GM12878 (cell line): ENCODE measurements at regions of chr4 and their contacts with region 1.

Region 1: GRCh38 chr4:53929955-53930798 is 134.2 kb downstream of the CHIC2 start:
- DNase-seq: peak; percentile 13
- ATAC-seq: peak; percentile 87
- H3K4me3 ChIP-seq: no peak overlapping the region
- H3K27ac ChIP-seq: no peak overlapping the region
- H3K4me1 ChIP-seq: no peaks in the 10 kb centered on the region
- H3K27me3 ChIP-seq: no peaks in the 10 kb centered on the region; a peak in 1 of 4 replicates
- CTCF ChIP-seq: peak; percentile 63 to 78 (median 65)
- EP300 ChIP-seq: no peak
- POLR2A ChIP-seq: no peak
- RAD21 ChIP-seq: peak; percentile 91

Region 2: DNA sequence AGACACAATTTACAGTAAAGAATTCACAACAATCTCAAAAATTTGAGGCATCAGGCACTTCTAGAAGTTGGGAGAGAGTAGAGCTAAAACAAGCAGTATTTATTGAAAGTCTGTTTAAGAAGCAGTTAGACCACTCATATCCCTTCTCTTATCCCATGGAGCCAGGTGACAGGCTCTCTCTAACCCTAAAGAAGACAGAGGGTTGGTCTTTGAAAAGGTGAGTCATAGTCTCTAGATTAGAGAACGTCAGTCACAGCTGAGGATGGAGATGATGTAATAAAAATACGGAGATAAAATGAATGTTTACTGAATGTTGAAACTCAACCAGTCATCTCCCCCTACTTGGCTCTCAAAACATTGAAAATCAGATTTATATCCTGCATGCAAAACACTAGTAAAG is 89.5 kb before region 1 on chr4:
- CTCF ChIA-PET with region 1: no interaction called
- POLR2A ChIA-PET with region 1: no interaction called
- RAD21 ChIA-PET with region 1: no interaction called
- SMC1A ChIA-PET with region 1: no interaction called
- in situ Hi-C with region 1: no loop called
- intact Hi-C with region 1: no loop called
- DNase-seq: no peak
- ATAC-seq: no peak
- H3K4me3 ChIP-seq: no peak overlapping the region
- H3K27ac ChIP-seq: no peak overlapping the region
- H3K4me1 ChIP-seq: no peaks in the 10 kb centered on the region
- H3K27me3 ChIP-seq: no peaks in the 10 kb centered on the region
- CTCF ChIP-seq: no peak
- EP300 ChIP-seq: no peak
- POLR2A ChIP-seq: no peak
- RAD21 ChIP-seq: no peak

Region 3: DNA sequence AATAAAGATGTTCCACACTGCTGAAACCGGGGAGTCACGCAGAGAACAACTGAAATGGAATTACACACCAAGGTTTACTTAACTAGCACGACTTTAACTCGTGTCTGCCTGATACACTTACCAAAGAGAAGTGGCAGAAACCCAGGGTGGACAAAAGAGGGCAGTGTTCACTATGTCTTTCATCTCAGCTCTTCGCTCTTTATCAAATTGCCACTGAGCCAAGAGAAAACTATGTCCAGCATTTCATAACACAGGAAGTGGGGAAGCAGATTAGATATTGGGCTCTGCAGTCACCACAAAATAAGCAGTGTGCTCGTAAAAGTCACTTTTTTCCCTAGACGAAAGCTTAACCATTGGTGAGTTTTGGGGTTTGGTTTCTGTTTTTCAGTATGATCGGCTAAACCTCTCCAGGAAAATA is 21.5 kb before region 1 on chr4:
- CTCF ChIA-PET with region 1: interaction called, 20 read pairs
- POLR2A ChIA-PET with region 1: no interaction called
- RAD21 ChIA-PET with region 1: interaction called, 3 read pairs
- SMC1A ChIA-PET with region 1: interaction called, 8 read pairs
- in situ Hi-C with region 1: no loop called
- intact Hi-C with region 1: no loop called
- DNase-seq: peak; percentile 8
- ATAC-seq: peak; percentile 83
- H3K4me3 ChIP-seq: no peak overlapping the region
- H3K27ac ChIP-seq: no peak overlapping the region
- H3K4me1 ChIP-seq: no peaks in the 10 kb centered on the region
- H3K27me3 ChIP-seq: peaks cover 0 to 3% of the 10 kb centered on the region in 2 experiments; a peak in 1 of 4 replicates
- CTCF ChIP-seq: peak; percentile 58 to 71 (median 59); a peak in 5 of 6 replicates
- EP300 ChIP-seq: no peak
- POLR2A ChIP-seq: no peak
- RAD21 ChIP-seq: peak; percentile 60

Region 4: DNA sequence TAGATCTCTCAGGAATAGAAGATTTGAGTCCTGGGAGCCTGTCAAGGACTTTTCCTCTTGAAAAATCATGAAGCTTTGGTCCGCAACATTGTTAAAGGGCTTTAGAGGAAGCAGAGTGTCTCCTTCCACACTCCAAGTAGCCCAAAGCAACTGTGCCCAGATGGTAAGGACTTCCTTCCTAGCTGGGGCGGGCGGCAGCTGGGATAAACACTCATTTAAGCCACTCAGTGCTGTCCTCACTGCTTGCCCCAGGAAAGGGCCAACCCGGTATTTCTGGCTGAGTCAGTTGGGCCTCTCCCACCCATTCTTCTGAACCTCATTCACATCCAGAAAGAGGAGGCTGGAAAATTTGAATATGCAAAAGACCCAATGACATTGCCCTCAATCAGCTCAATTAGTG is 10.1 kb before region 1 on chr4:
- CTCF ChIA-PET with region 1: interaction called, 10 read pairs
- POLR2A ChIA-PET with region 1: no interaction called
- RAD21 ChIA-PET with region 1: interaction called, 3 read pairs
- SMC1A ChIA-PET with region 1: interaction called, 4 read pairs
- in situ Hi-C with region 1: no loop called
- intact Hi-C with region 1: no loop called
- DNase-seq: no peak
- ATAC-seq: no peak
- H3K4me3 ChIP-seq: no peak overlapping the region
- H3K27ac ChIP-seq: no peak overlapping the region
- H3K4me1 ChIP-seq: no peaks in the 10 kb centered on the region
- H3K27me3 ChIP-seq: 0 out of 4 replicates have a peak, but pooled peaks cover 0 to 2% of the 10 kb centered on the region in 2 experiments
- CTCF ChIP-seq: no peak
- EP300 ChIP-seq: no peak
- POLR2A ChIP-seq: no peak
- RAD21 ChIP-seq: no peak

Region 5: GRCh38 chr4:53943345-53944085 is 13.3 kb after region 1 on chr4:
- CTCF ChIA-PET with region 1: interaction called, 10 read pairs
- POLR2A ChIA-PET with region 1: no interaction called
- RAD21 ChIA-PET with region 1: no interaction called
- SMC1A ChIA-PET with region 1: interaction called, 4 read pairs
- in situ Hi-C with region 1: no loop called
- intact Hi-C with region 1: no loop called
- DNase-seq: no peak
- ATAC-seq: no peak
- H3K4me3 ChIP-seq: no peak overlapping the region
- H3K27ac ChIP-seq: no peak overlapping the region
- H3K4me1 ChIP-seq: no peaks in the 10 kb centered on the region
- H3K27me3 ChIP-seq: no peaks in the 10 kb centered on the region; a peak in 1 of 4 replicates
- CTCF ChIP-seq: no peak
- EP300 ChIP-seq: no peak
- POLR2A ChIP-seq: no peak
- RAD21 ChIP-seq: no peak

Region 6: GRCh38 chr4:54217642-54218495 is 287.7 kb after region 1 on chr4:
- CTCF ChIA-PET with region 1: interaction called, 130 read pairs
- POLR2A ChIA-PET with region 1: no interaction called
- RAD21 ChIA-PET with region 1: interaction called, 7 read pairs
- SMC1A ChIA-PET with region 1: interaction called, 63 read pairs
- in situ Hi-C with region 1: no loop called
- intact Hi-C with region 1: loop called (anchors 1 kb)
- DNase-seq: no peak
- ATAC-seq: peak; percentile 97
- H3K4me3 ChIP-seq: no peak overlapping the region
- H3K27ac ChIP-seq: no peak overlapping the region
- H3K4me1 ChIP-seq: no peaks in the 10 kb centered on the region
- H3K27me3 ChIP-seq: no peaks in the 10 kb centered on the region; a peak in 2 of 4 replicates
- CTCF ChIP-seq: peak; percentile 71 to 90 (median 76); a peak in 5 of 6 replicates
- EP300 ChIP-seq: no peak
- POLR2A ChIP-seq: no peak
- RAD21 ChIP-seq: peak; percentile 92

Region 7: GRCh38 chr4:54228056-54228527 is 297.9 kb after region 1 on chr4:
- CTCF ChIA-PET with region 1: interaction called, 68 read pairs
- POLR2A ChIA-PET with region 1: no interaction called
- RAD21 ChIA-PET with region 1: interaction called, 29 read pairs
- SMC1A ChIA-PET with region 1: interaction called, 19 read pairs
- in situ Hi-C with region 1: loop called (anchors 5 kb)
- intact Hi-C with region 1: no loop called
- DNase-seq: no peak
- ATAC-seq: peak; percentile 76
- H3K4me3 ChIP-seq: peak overlapping the region; percentile 54; the same call in 1 of the 2 replicates
- H3K27ac ChIP-seq: no peak overlapping the region
- H3K4me1 ChIP-seq: peaks cover 3% of the 10 kb centered on the region; the same call in 1 of the 2 replicates
- H3K27me3 ChIP-seq: peaks cover 31 to 32% of the 10 kb centered on the region in 2 experiments
- CTCF ChIP-seq: peak; percentile 64 to 83 (median 73)
- EP300 ChIP-seq: no peak; a peak in 1 of 4 replicates
- POLR2A ChIP-seq: no peak
- RAD21 ChIP-seq: peak; percentile 60